Motor neuron (in vitro differentiated cells): ENCODE measurements at regions of chr10 and their contacts with region 1.

Region 1: DNA sequence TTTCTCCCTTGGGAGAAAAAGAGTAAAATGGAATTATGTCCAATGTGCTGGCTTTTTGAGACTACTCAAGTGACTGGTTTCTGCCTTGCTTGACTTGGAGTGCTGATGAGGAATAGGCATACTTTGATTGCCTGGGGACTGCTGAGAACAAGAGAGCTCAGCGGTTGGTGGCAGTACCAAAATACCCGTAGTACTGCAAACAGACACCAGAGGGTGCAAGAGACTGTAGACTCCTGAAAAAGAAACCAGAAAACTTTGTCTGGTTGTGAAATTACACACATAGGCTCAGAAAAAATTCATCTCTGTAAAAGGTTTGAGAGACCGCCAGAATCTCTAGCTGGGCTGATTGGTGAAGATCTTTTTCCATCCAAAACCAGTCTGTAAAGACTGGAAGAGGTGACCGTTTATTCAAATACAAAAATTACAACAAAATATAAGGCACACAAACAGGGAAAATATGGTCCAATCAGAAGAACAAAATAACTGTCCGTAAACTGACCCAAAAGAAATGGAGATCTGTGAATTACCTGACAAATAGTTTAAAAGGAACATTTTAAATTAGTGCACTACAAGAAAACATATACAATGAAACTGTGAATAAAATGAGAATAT is 18.5 kb downstream of the BICC1 start:
- ATAC-seq: peak in 4 of 8 experiments; percentile 17 to 75 (median 68)
- H3K4me3 ChIP-seq: no peak overlapping the region
- H3K27ac ChIP-seq: no peak overlapping the region
- H3K4me1 ChIP-seq: no peaks in the 10 kb centered on the region

Region 2: DNA sequence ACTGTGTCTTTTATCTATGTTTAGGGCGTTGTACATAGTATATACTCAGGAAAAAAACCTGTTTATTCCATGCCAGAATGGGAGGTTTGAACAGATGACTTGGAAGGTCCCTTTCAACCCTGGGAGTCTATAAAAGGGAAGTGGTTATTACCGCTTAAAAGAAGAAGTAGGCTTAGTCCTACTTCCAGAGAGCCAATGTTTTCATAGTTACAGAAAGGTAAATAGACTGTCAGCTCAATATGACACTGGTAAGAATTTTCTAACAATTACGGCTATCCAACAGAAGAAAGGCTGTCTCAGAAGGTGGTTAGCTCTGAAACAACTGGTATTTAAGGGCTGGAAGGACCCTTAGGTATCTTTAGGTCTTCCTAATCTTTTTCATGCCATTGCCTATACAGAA is 147.1 kb before region 1 on chr10:
- in situ Hi-C with region 1: no loop called
- ATAC-seq: no peak
- H3K4me3 ChIP-seq: peak overlapping the region in 4 of 5 donors; percentile 50 to 80 (median 66)
- H3K27ac ChIP-seq: peak overlapping the region in 1 of 2 donors; percentile 79
- H3K4me1 ChIP-seq: peaks cover 12 to 16% of the 10 kb centered on the region in 2 donors

Region 3: DNA sequence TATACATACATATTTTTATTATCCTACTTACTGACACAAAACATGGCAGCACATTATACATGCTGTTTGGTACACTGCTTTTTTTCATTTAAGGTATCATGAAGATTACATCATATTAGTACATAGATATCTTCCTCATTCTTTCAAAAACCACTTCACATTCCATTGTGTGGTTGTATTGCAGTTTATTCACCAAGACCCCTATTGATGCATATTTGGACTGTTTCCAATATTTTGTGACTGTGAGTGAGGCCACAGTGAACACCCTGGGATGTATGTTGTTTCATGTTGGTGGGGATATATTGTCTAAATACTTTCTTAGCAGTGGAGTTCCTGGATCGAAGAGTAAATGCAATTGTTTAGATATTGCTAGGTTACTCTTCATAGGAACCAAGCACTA is 107.0 kb before region 1 on chr10:
- in situ Hi-C with region 1: no loop called
- ATAC-seq: no peak
- H3K4me3 ChIP-seq: no peak overlapping the region
- H3K27ac ChIP-seq: no peak overlapping the region
- H3K4me1 ChIP-seq: no peaks in the 10 kb centered on the region

Region 4: GRCh38 chr10:58641095-58641531 is 109.9 kb after region 1 on chr10:
- in situ Hi-C with region 1: loop called in 2 of 9 experiments (anchors 25 kb)
- ATAC-seq: peak in 6 of 8 experiments; percentile 16 to 64 (median 57)
- H3K4me3 ChIP-seq: no peak overlapping the region
- H3K27ac ChIP-seq: peak overlapping the region in 1 of 2 donors; percentile 54
- H3K4me1 ChIP-seq: peaks cover 11 to 27% of the 10 kb centered on the region in 2 donors

Region 5: GRCh38 chr10:58755677-58756076 is 224.5 kb after region 1 on chr10:
- in situ Hi-C with region 1: loop called in 1 of 9 experiments (anchors 25 kb)
- ATAC-seq: peak in 2 of 8 experiments; percentile 66 to 79
- H3K4me3 ChIP-seq: no peak overlapping the region
- H3K27ac ChIP-seq: no peak overlapping the region
- H3K4me1 ChIP-seq: peaks cover 25 to 42% of the 10 kb centered on the region in 2 donors

Region 6: GRCh38 chr10:59965976-59966650 is 1434.9 kb after region 1 on chr10:
- in situ Hi-C with region 1: no loop called
- ATAC-seq: no peak
- H3K4me3 ChIP-seq: no peak overlapping the region
- H3K27ac ChIP-seq: no peak overlapping the region
- H3K4me1 ChIP-seq: no peaks in the 10 kb centered on the region